ENCODE measurements at regions of chr5 and their contacts with region 1.

Region 1: GRCh38 chr5:148966348-148966747 is 96.5 kb downstream of the SH3TC2 start:
- DNase-seq: no peak
- H3K4me3 Mint-ChIP-seq: no peak overlapping the region
- H3K27ac Mint-ChIP-seq: peak overlapping the region; percentile 99
- H3K4me1 Mint-ChIP-seq: peaks cover 79% of the 10 kb centered on the region
- H3K27me3 Mint-ChIP-seq: no peaks in the 10 kb centered on the region
- CTCF ChIP-seq: no peak

Region 2: GRCh38 chr5:148979104-148979723 is 12.9 kb after region 1 on chr5:
- CTCF ChIA-PET with region 1: interaction called, 12 read pairs
- intact Hi-C with region 1: no loop called
- DNase-seq: no peak
- H3K4me3 Mint-ChIP-seq: no peak overlapping the region
- H3K27ac Mint-ChIP-seq: peak overlapping the region; percentile 33
- H3K4me1 Mint-ChIP-seq: peaks cover 62% of the 10 kb centered on the region
- H3K27me3 Mint-ChIP-seq: no peaks in the 10 kb centered on the region
- CTCF ChIP-seq: no peak